ENCODE measurements at regions of chr14 and their contacts with region 1.

Region 1: GRCh38 chr14:21098076-21098891 is at the start of gene ZNF219:
- DNase-seq: peak; percentile 74
- ATAC-seq: peak; percentile 57
- H3K4me3 ChIP-seq: peak within 1 kb of the TSS; percentile 67 to 85 (median 83)
- H3K27ac ChIP-seq: peak within 1 kb of the TSS; percentile 70
- H3K4me1 ChIP-seq: peaks cover 82% of the 10 kb centered on the region
- H3K27me3 ChIP-seq: no peaks in the 10 kb centered on the region; a peak in 1 of 5 replicates
- CTCF ChIP-seq: no peak; the same call in 1 of the 2 replicates
- EP300 ChIP-seq: no peak; a peak in 1 of 4 replicates
- POLR2A ChIP-seq: peak in 1 of 2 experiments; percentile 39; a peak in 1 of 4 replicates
- RAD21 ChIP-seq: no peak
- total RNA-seq, gene ZNF219: 21.0 and 36.6 TPM in 2 replicates

Region 2: GRCh38 chr14:20564501-20564997 is 533.7 kb before region 1 on chr14:
- CTCF ChIA-PET with region 1: no interaction called
- POLR2A ChIA-PET with region 1: no interaction called
- in situ Hi-C with region 1: no loop called
- intact Hi-C with region 1: no loop called
- DNase-seq: no peak
- ATAC-seq: no peak
- H3K4me3 ChIP-seq: no peak overlapping the region
- H3K27ac ChIP-seq: no peak overlapping the region
- H3K4me1 ChIP-seq: no peaks in the 10 kb centered on the region
- H3K27me3 ChIP-seq: no peaks in the 10 kb centered on the region
- CTCF ChIP-seq: no peak
- EP300 ChIP-seq: no peak
- POLR2A ChIP-seq: no peak
- RAD21 ChIP-seq: no peak

Region 3: GRCh38 chr14:21063479-21063878 is 34.8 kb before region 1 on chr14:
- CTCF ChIA-PET with region 1: interaction called, 135 read pairs
- POLR2A ChIA-PET with region 1: interaction called, 141 read pairs
- in situ Hi-C with region 1: loop called (anchors 5 kb)
- intact Hi-C with region 1: no loop called
- DNase-seq: no peak
- ATAC-seq: no peak
- H3K4me3 ChIP-seq: no peak overlapping the region
- H3K27ac ChIP-seq: no peak overlapping the region
- H3K4me1 ChIP-seq: peaks cover 87% of the 10 kb centered on the region
- H3K27me3 ChIP-seq: no peaks in the 10 kb centered on the region
- CTCF ChIP-seq: no peak
- EP300 ChIP-seq: no peak
- POLR2A ChIP-seq: no peak
- RAD21 ChIP-seq: no peak

Region 4: GRCh38 chr14:21084988-21085853 is 13.1 kb before region 1 on chr14:
- CTCF ChIA-PET with region 1: interaction called, 320 read pairs
- POLR2A ChIA-PET with region 1: interaction called, 19 read pairs
- in situ Hi-C with region 1: no loop called
- intact Hi-C with region 1: no loop called
- DNase-seq: no peak
- ATAC-seq: peak; percentile 17; the same call in 2 of the 3 replicates
- H3K4me3 ChIP-seq: no peak overlapping the region
- H3K27ac ChIP-seq: no peak overlapping the region
- H3K4me1 ChIP-seq: peaks cover 22% of the 10 kb centered on the region
- H3K27me3 ChIP-seq: no peaks in the 10 kb centered on the region
- CTCF ChIP-seq: 0 out of 2 replicates have a peak, but pooled peaks have one; percentile 4
- EP300 ChIP-seq: no peak
- POLR2A ChIP-seq: no peak
- RAD21 ChIP-seq: no peak

Region 5: GRCh38 chr14:21807975-21808374 is 709.7 kb after region 1 on chr14:
- CTCF ChIA-PET with region 1: no interaction called
- POLR2A ChIA-PET with region 1: no interaction called
- in situ Hi-C with region 1: no loop called
- intact Hi-C with region 1: no loop called
- DNase-seq: no peak
- ATAC-seq: no peak; the same call in 2 of the 3 replicates
- H3K4me3 ChIP-seq: no peak overlapping the region
- H3K27ac ChIP-seq: no peak overlapping the region
- H3K4me1 ChIP-seq: no peaks in the 10 kb centered on the region
- H3K27me3 ChIP-seq: no peaks in the 10 kb centered on the region
- CTCF ChIP-seq: peak; percentile 19; the same call in 1 of the 2 replicates
- EP300 ChIP-seq: no peak
- POLR2A ChIP-seq: no peak
- RAD21 ChIP-seq: no peak